Ascending aorta (tissue), 2 donors: ENCODE measurements at regions of chr6 and their contacts with region 1.

Region 1: DNA sequence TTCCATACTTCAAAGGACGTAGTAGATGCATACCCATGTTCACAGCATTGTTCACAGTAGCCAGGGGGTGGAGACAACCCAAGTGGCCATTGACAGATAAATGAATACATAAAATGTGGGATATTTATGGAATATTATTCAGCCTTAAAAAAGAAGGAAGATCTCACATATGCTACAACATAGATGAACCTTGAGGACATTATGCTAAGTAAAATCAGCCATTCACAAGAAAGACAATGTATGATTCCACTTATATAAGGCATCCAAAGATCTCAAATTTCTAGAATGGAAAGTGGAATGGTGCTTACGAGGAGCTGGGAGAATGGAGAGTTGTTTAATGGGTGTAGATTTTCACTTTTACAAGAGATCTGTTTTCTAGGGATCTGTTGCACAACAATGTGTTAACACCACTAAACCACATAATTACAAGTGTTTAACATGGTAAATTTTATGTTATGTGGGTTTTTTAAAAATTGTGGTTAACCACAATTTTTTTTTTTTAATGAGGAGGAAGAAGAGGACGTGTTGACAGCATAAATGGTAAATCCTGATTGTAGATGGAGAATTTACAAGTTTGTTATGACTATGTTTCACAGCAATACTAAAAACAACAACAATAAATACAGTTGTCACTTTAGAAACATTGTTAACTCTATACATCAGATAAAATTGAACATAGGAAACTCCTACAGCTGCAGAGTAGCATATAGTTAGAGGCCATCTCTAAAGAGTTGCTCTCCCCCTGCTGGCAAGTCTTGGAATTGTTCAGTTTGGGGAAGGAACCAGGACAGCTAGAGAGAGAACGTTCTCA is 41.6 kb downstream of the CCN2 start:
- DNase-seq: peak in 1 of 2 donors; percentile 83
- H3K4me3 ChIP-seq: no peak overlapping the region
- H3K27ac ChIP-seq: no peak overlapping the region
- H3K4me1 ChIP-seq: no peaks in the 10 kb centered on the region
- H3K27me3 ChIP-seq: no peaks in the 10 kb centered on the region
- CTCF ChIP-seq: peak; percentile 66 to 89 (median 88)

Region 2: GRCh38 chr6:131694831-131695426 is 214.7 kb before region 1 on chr6:
- intact Hi-C with region 1: loop called (anchors 1 kb)
- DNase-seq: peak in 1 of 2 donors; percentile 68
- H3K4me3 ChIP-seq: no peak overlapping the region
- H3K27ac ChIP-seq: no peak overlapping the region
- H3K4me1 ChIP-seq: no peaks in the 10 kb centered on the region
- H3K27me3 ChIP-seq: no peaks in the 10 kb centered on the region
- CTCF ChIP-seq: peak; percentile 69 to 93 (median 84)